Right ventricle myocardium superior (tissue), 1 donor: ENCODE measurements at regions of chr2 and their contacts with region 1.

Region 1: GRCh38 chr2:28392297-28393113 is at the start of gene FOSL2:
- DNase-seq: peak; percentile 97
- ATAC-seq: peak; percentile 71
- total RNA-seq, gene FOSL2: 45.7 TPM

Region 2: GRCh38 chr2:27735263-27735953 is 657.1 kb before region 1 on chr2:
- intact Hi-C with region 1: loop called (anchors 10 kb)
- DNase-seq: peak; percentile 90
- ATAC-seq: peak; percentile 95

Region 3: GRCh38 chr2:27771548-27772335 is 620.8 kb before region 1 on chr2 and contains the start of gene MRPL33:
- intact Hi-C with region 1: loop called (anchors 10 kb)
- DNase-seq: peak; percentile 97
- ATAC-seq: peak; percentile 97
- total RNA-seq, gene MRPL33: 356 TPM

Region 4: GRCh38 chr2:28276076-28276618 is 116.4 kb before region 1 on chr2:
- intact Hi-C with region 1: loop called (anchors 10 kb)
- DNase-seq: no peak
- ATAC-seq: peak; percentile 18

Region 5: GRCh38 chr2:28333606-28334526 is 58.6 kb before region 1 on chr2:
- intact Hi-C with region 1: loop called (anchors 5 kb)
- DNase-seq: peak; percentile 75
- ATAC-seq: peak; percentile 86